ENCODE measurements at regions of chr6 and their contacts with region 1.

Region 1: GRCh38 chr6:132962936-132963868 is 148.8 kb downstream of the RPS12 start:
- DNase-seq: peak; percentile 66
- H3K4me3 Mint-ChIP-seq: no peak overlapping the region
- H3K27ac Mint-ChIP-seq: no peak overlapping the region
- H3K4me1 Mint-ChIP-seq: peaks cover 17% of the 10 kb centered on the region
- H3K27me3 Mint-ChIP-seq: peaks cover 18% of the 10 kb centered on the region

Region 2: GRCh38 chr6:132830334-132830751 is 132.9 kb before region 1 on chr6:
- CTCF ChIA-PET with region 1: interaction called, 16 read pairs
- POLR2A ChIA-PET with region 1: no interaction called
- DNase-seq: no peak
- H3K4me3 Mint-ChIP-seq: no peak overlapping the region
- H3K27ac Mint-ChIP-seq: no peak overlapping the region
- H3K4me1 Mint-ChIP-seq: no peaks in the 10 kb centered on the region
- H3K27me3 Mint-ChIP-seq: peaks cover 6% of the 10 kb centered on the region

Region 3: DNA sequence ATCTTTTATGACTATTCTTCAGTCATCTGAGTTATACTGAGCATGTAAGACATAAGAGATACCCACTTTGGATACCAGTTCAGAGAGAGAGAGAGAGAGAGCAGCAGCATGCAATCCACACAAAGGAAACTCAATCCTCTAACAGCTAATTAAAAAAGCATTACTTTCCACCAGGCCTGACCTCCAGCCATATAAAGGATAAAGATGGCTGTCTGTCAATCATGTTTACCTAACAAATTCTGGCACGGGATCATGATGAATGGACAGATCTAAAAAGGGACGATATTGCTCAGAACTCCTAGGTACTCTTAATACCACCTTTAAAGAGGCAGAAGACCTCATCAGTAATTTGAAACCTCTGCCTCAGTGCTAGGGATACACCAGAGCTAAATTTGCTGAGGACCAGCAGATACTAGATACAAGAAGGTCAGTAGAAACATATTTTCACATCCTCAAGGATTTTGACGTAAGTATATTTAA is 10.4 kb after region 1 on chr6:
- CTCF ChIA-PET with region 1: interaction called, 14 read pairs
- POLR2A ChIA-PET with region 1: no interaction called
- DNase-seq: no peak
- H3K4me3 Mint-ChIP-seq: no peak overlapping the region
- H3K27ac Mint-ChIP-seq: no peak overlapping the region
- H3K4me1 Mint-ChIP-seq: no peaks in the 10 kb centered on the region
- H3K27me3 Mint-ChIP-seq: peaks cover 18% of the 10 kb centered on the region

Region 4: DNA sequence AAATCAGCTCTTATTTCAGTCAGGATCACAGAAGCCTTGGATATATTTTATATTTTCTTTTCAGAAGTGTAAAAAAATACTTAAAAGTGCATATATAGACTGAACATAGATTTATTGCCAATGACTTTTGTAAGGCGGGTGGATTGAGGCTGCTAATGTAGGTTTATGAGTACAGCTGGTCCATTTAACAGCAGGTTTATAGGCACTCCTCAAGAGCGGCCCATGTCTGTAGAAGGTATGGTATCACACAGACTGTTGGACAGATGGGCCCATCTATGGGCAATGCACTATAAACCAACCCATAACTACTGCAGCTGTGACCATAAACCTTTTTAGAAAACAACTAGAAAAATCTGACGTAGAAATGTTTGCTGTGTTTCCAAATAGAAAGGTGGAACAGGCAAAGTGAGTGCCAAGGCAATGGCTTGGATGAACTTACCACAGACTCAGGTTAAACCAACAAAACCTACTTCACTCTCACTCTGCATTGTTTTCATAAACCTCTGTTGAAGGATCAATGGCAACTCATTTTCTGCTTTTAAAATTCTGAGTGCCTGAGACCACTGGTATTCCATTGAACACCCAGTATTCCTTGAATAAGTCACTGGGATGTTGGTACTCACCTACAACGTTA is 107.3 kb after region 1 on chr6:
- CTCF ChIA-PET with region 1: no interaction called
- POLR2A ChIA-PET with region 1: no interaction called
- DNase-seq: no peak
- H3K4me3 Mint-ChIP-seq: no peak overlapping the region
- H3K27ac Mint-ChIP-seq: no peak overlapping the region
- H3K4me1 Mint-ChIP-seq: no peaks in the 10 kb centered on the region
- H3K27me3 Mint-ChIP-seq: peaks cover 1% of the 10 kb centered on the region